ENCODE measurements at regions of chr2 and their contacts with region 1.

Region 1: GRCh38 chr2:203814661-203815540 is 52.7 kb upstream of the CTLA4 start:
- H3K4me3 Mint-ChIP-seq: no peak overlapping the region
- H3K27ac Mint-ChIP-seq: peak overlapping the region; percentile 63
- H3K4me1 Mint-ChIP-seq: peaks cover 78% of the 10 kb centered on the region
- H3K27me3 Mint-ChIP-seq: peaks cover 2% of the 10 kb centered on the region

Region 2: DNA sequence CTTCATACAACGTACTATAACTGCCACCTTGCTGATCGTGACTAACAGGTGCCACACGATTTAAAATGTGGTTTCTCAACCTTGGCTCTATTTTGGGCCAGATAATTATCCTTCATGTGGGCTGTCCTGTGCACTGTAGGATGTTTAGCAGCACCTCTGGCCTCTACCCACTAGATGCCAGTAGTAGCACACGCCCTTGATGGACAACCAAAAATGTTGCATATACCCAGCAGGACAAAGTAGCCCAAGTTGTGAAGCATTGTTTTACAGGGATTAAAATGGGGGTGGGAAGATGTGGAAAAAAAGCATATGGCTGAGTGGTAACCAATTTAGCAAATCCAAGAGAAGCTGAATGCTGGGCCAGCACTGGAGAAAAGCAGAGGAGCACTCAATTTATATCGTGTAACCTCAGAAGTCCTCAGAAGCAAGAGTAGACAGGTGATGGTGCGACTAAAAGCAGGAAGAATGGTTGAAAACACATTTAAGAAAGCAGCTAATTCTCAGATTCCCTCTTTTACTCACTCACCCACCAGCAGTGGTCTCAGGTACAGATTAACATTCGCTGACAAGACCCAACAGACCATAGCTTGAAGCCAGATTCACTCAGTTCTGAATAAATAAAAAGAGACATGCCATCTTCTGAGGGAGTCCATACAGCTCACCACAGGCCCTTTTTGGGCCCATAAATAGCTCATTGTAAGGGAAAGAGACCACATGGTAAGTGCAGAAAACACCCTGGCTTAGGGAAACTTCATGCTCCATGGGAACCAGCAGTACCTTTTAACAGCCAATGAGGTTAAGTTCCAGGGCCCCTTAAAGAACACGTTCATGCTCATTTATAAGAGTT is 330.4 kb before region 1 on chr2:
- intact Hi-C with region 1: loop called (anchors 1 kb)
- H3K4me3 Mint-ChIP-seq: no peak overlapping the region
- H3K27ac Mint-ChIP-seq: no peak overlapping the region
- H3K4me1 Mint-ChIP-seq: no peaks in the 10 kb centered on the region
- H3K27me3 Mint-ChIP-seq: no peaks in the 10 kb centered on the region

Region 3: DNA sequence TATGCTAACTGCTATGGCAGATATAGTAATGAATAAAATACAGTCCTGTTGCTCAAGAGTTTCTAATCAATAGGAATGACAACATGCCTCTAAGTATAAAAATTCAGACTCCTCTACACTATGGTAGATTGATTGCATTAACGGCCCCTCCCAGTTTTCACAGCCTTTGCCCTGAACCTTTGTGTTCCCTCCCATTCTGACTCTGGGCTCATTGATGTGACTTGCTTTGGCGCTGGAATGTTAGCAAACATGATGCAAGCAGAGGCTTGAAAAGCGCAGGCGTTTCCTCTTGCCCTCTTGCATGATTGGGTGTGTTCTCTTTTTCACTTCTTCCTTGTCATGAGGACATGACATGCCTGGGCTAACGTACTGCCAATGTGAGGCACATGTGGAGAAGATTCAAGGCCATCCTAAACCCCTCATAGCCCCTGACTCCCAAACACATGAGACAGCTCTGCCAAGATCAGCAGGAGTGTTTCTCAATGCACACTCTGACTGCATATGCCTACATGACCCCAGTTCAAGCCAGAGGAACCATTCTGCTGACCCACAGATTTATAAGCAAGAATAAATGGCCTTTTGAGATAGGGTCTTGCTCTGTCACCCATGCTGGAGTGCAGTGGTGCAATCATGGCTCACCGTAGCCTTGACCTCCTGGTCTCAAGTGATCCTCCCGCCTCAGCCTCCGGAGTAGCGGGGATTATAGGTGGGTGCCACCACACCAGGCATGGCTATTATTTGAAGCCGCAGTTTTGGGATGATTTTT is 158.2 kb before region 1 on chr2:
- intact Hi-C with region 1: loop called (anchors 5 kb)
- H3K4me3 Mint-ChIP-seq: no peak overlapping the region
- H3K27ac Mint-ChIP-seq: peak overlapping the region; percentile 82
- H3K4me1 Mint-ChIP-seq: peaks cover 70% of the 10 kb centered on the region
- H3K27me3 Mint-ChIP-seq: no peaks in the 10 kb centered on the region

Region 4: DNA sequence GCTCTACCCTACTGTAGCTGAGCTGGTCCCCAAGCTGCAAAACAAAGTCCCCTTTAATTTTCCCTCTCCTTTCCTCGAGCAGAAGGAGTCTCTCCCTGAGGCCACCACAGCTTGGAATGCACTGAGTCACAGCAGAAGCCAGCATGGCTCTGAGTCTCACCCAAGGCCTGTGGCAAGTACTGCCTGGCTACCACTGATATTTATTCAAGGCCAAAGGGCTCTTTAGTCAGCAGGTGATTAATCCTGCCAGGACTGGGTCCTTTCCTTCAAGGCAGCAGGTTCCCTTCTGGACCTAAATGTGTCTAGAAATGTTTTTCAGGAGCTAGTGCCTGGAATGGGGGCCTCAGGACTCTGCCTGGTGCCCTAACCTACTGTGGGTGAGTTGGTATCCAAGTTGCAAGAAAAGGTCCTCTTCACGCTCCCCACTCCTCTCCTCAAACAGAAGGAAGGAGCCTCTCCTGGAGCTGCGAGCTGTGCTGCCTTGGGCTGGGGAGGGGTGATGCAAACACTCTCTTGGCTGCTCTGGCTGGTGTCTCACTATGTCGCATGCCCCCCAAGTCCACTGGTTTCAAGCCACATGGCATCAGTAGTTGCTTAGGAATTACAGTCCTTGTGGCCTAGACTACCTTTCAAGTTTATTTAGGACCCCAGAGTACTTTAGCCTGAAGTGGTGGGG is 55.1 kb before region 1 on chr2:
- intact Hi-C with region 1: no loop called
- H3K4me3 Mint-ChIP-seq: no peak overlapping the region
- H3K27ac Mint-ChIP-seq: peak overlapping the region; percentile 17
- H3K4me1 Mint-ChIP-seq: peaks cover 15% of the 10 kb centered on the region
- H3K27me3 Mint-ChIP-seq: no peaks in the 10 kb centered on the region

Region 5: GRCh38 chr2:203786549-203787351 is 28.2 kb before region 1 on chr2:
- intact Hi-C with region 1: loop called (anchors 2 kb)
- H3K4me3 Mint-ChIP-seq: no peak overlapping the region
- H3K27ac Mint-ChIP-seq: peak overlapping the region; percentile 80
- H3K4me1 Mint-ChIP-seq: peaks cover 43% of the 10 kb centered on the region
- H3K27me3 Mint-ChIP-seq: peaks cover 3% of the 10 kb centered on the region

Region 6: GRCh38 chr2:203797712-203798111 is 17.2 kb before region 1 on chr2:
- intact Hi-C with region 1: loop called (anchors 2 kb)
- H3K4me3 Mint-ChIP-seq: no peak overlapping the region
- H3K27ac Mint-ChIP-seq: no peak overlapping the region
- H3K4me1 Mint-ChIP-seq: peaks cover 28% of the 10 kb centered on the region
- H3K27me3 Mint-ChIP-seq: no peaks in the 10 kb centered on the region

Region 7: DNA sequence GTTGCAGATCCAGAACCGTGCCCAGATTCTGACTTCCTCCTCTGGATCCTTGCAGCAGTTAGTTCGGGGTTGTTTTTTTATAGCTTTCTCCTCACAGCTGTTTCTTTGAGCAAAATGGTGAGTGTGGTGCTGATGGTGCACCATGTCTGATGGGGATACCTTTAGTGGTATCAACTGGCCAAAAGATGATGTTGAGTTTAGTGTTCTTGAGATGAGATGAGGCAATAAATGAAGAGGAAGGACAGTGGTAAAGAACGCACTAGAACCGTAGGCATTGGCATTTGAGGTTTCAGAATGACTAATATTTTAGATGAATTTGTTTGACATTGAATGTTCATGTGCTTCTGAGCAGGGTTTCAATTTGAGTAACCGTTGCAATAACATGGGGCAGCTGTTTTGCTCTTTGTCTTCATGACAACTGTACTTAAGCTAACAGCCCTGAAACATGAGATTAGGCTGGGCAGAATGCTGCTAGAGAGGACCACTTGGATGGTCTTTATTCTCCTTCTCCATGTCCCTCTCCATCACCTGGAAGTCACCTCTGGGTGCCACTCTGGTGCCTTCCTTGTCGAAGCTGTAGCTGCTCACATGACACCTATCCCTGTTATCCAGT is 56.6 kb after region 1 on chr2:
- intact Hi-C with region 1: loop called (anchors 5 kb)
- H3K4me3 Mint-ChIP-seq: peak overlapping the region; percentile 1
- H3K27ac Mint-ChIP-seq: peak overlapping the region; percentile 87
- H3K4me1 Mint-ChIP-seq: peaks cover 70% of the 10 kb centered on the region
- H3K27me3 Mint-ChIP-seq: peaks cover 5% of the 10 kb centered on the region

Region 8: DNA sequence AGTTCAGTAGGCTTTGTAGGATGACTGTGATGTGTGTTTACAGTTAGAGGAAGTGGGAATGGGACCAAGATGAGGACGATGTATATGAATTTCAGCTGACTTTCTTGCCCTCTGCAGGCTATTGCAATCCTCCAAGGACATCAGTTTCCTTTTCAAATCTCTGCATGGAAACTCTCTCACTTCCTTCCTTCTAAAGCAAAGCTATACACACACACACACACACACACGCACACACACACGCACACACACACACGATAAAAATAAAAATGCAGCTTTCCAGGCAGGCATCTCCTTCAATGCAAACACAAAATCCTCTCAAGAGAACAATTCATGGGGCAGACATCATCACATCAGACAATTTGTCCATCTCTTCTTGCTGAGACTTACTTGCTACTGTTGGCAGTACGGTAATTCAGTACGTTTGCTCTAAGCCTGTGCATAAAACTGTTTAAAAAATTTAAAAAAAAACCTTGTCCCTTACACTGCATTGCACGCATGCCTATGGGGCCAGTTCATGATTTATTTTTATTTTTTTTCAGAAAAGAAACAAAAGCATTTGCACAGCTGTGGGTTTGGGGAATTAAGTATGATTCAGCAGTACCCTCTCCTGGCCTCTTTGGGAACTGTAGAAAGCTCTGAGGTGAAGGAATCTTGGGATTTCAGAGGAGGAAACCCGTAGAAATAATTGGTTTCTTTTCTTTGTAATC is 94.5 kb after region 1 on chr2:
- intact Hi-C with region 1: loop called (anchors 2 kb)
- H3K4me3 Mint-ChIP-seq: peak overlapping the region; percentile 68
- H3K27ac Mint-ChIP-seq: peak overlapping the region; percentile 88
- H3K4me1 Mint-ChIP-seq: peaks cover 22% of the 10 kb centered on the region
- H3K27me3 Mint-ChIP-seq: no peaks in the 10 kb centered on the region